ENCODE measurements at regions of chr5 and their contacts with region 1.

Region 1: DNA sequence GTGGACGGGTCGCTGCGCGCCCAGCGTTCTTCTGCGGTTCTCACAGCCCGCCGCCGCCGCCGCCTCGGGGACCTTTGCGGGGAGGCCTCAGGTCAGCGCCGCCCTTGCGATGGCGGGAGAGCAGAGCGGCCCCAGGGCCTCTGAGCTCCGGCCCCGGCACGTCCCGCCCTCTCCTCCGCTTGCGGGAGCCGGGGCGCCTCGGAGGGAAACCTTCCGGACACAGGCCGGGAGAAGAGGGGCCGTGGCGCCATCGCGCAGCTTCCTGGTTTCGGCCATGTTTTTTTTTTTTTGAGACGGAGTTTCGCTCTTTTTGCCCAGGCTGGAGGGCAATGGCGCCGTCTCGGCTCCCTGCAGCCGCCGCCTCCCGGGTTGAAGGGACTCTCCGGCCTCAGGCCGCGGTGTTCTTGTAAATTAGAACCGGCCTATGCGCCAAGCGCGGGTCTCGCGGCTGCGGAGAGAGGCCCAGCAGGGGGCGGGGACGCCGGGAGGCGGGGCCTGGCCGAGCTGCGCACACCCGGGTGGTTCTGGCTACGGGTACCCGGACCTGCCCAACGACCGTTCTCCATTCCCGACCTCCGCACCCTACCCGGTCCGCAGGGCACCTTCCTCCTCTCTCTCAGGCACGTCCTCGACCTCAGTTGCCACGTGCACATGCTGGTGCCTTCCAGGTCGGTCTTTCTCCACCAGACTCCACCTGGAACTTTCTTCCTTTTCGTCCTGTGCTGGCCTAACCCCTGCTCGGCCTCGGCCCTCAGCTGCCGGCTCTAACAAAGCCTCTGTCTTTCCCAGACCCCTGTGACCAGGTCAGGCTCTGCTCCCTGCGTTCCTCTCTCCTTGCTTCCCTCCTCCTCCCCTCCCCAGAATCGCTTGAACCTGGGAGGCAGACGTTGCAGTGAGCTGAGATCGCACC is 28.8 kb upstream of the MGAT1 start:
- DNase-seq: peak; percentile 75 to 90
- ATAC-seq: peak; percentile 97
- H3K4me3 ChIP-seq: peak overlapping the region; percentile 66
- H3K27ac ChIP-seq: peak overlapping the region; percentile 93 to 99
- H3K4me1 ChIP-seq: peaks cover 22% of the 10 kb centered on the region
- CTCF ChIP-seq: no peak
- EP300 ChIP-seq: no peak
- POLR2A ChIP-seq: peak; percentile 70
- RAD21 ChIP-seq: no peak

Region 2: DNA sequence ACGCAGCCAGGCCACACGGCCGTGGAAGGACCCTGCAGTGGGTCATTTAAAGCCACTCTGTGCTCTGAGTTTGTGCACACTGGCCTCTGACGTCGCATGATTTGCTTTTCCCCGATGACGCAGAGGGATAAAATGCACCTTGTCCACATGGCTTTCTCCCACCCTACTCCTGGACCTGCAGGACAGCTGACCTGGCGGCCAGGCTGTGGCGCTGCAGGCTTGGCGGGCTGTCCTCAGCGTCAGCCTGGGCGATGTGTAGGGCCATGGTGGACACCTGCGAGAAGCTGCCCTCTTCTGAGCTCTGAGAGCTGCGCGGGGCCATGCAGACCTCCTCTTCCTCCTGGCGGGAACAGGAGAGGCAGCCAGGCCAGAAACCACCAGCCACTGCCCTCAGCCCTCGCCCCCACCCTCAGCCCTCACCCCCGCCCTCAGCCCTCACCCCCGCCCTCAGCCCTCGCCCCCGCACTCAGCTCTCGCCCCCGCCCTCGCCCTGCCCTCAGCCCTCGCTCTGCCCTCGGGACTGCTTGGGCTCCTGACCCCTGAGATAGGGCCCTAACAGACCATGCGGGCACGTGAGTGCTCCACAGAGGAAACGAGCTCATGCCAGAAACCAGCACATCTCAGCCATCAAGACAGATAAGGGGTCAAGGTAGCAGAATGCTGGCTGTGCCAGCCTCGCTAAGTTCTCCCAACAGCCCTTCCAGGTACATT is 220.1 kb before region 1 on chr5:
- CTCF ChIA-PET with region 1: no interaction called
- POLR2A ChIA-PET with region 1: no interaction called
- DNase-seq: peak; percentile 33 to 69
- ATAC-seq: peak; percentile 42 to 88; a peak in 3 of 6 replicates
- H3K4me3 ChIP-seq: no peak overlapping the region
- H3K27ac ChIP-seq: no peak overlapping the region
- H3K4me1 ChIP-seq: no peaks in the 10 kb centered on the region
- CTCF ChIP-seq: 0 out of 3 replicates have a peak, but pooled peaks have one; percentile 18
- EP300 ChIP-seq: no peak
- POLR2A ChIP-seq: no peak
- RAD21 ChIP-seq: peak; percentile 27 to 53; a peak in 4 of 5 replicates

Region 3: GRCh38 chr5:180704368-180704869 is 127.0 kb before region 1 on chr5:
- CTCF ChIA-PET with region 1: no interaction called
- POLR2A ChIA-PET with region 1: no interaction called
- DNase-seq: peak in 1 of 2 experiments; percentile 62
- ATAC-seq: peak in 1 of 2 experiments; percentile 43; a peak in 3 of 6 replicates
- H3K4me3 ChIP-seq: no peak overlapping the region
- H3K27ac ChIP-seq: no peak overlapping the region
- H3K4me1 ChIP-seq: 0 out of 3 replicates have a peak, but pooled peaks cover 4% of the 10 kb centered on the region
- CTCF ChIP-seq: no peak
- EP300 ChIP-seq: no peak
- POLR2A ChIP-seq: no peak
- RAD21 ChIP-seq: no peak

Region 4: GRCh38 chr5:180860887-180861822 is 29.8 kb after region 1 on chr5 and contains the start of gene ZFP62:
- CTCF ChIA-PET with region 1: no interaction called
- POLR2A ChIA-PET with region 1: interaction called, 15 read pairs
- DNase-seq: peak; percentile 77 to 94
- ATAC-seq: peak; percentile 94 to 98
- H3K4me3 ChIP-seq: peak within 1 kb of the TSS; percentile 95
- H3K27ac ChIP-seq: peak within 1 kb of the TSS; percentile 97 to 98
- H3K4me1 ChIP-seq: peaks cover 19% of the 10 kb centered on the region
- CTCF ChIP-seq: no peak; the same call in 2 of the 3 replicates
- EP300 ChIP-seq: no peak
- POLR2A ChIP-seq: peak; percentile 21; the same call in 1 of the 2 replicates
- RAD21 ChIP-seq: no peak
- polyA plus RNA-seq, gene ZFP62: 19.2 and 23.4 TPM in 2 replicates